Common myeloid progenitor, CD34-positive (primary cell): ENCODE measurements at regions of chr3 and their contacts with region 1.

Region 1: DNA sequence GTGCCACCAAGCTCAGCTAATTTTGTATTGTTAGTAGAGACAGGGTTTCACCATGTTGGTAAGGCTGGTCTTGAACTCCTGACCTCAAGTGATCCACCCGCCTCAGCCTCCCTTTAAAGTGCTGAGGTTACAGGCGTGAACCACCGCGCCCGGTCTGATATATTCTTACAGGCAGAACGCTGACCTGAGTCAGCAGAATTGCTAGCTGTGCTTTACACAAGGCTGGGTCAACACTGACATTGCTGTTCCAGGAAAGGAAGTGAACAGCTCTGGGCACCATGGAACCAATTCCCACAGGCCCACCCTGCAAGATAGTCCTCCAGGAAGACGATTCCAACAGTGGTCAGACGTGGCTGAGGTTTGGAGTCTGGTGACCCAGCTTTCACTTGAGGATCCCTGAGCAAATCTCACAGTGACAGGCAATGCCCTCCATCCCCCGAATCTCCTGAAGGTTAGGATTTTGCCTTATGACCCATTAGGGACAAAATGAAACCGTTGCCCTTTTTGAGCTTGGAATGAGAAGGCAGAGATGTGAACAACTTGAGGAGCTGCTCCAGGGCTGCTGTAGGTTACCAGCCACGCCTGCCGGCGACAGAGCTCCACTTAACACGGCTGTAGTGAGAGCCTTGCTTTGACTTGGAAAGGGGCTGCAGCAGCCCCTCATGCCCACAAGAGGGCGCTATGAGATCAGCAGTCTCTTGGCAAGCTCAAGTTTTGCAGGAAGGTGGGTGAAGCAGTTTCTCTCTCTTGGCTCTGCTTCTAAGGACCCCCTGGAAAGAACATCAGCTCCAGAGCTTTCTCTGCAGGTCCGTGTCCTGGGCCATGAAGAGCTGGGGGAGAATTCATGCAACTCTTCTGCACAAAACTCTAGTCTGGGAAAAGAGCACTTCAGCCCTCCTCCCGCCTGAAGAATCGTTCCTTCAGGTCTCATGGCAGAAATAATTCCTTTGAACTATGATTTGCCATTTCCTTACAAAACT is 74.1 kb downstream of the SENP2 start:
- DNase-seq: peak; percentile 81 to 90 (median 88)
- H3K4me3 ChIP-seq: no peak overlapping the region
- H3K27ac ChIP-seq: no peak overlapping the region
- H3K4me1 ChIP-seq: peaks cover 0 to 4% (median 0%) of the 10 kb centered on the region in 4 experiments
- H3K27me3 ChIP-seq: no peaks in the 10 kb centered on the region

Region 2: DNA sequence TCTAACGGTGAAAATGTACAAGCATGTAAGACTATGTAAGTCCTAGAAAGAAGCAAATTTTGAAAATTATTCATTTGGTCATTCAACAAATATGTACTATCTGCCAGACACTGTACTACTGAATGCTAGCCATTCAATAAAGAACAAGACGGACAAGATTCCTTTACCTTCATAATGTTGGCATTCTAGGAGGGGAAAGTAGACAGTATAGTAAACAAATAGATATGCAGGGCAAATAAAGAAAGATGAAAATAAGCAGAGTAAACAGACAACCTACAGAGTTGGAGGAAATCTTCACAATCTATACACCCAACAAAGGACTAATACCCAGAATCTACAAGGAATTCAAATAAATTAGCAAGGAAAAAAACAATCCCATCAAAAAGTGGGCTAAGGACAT is 540.1 kb before region 1 on chr3:
- CTCF ChIA-PET with region 1: no interaction called
- POLR2A ChIA-PET with region 1: no interaction called
- DNase-seq: no peak
- H3K4me3 ChIP-seq: no peak overlapping the region
- H3K27ac ChIP-seq: no peak overlapping the region
- H3K4me1 ChIP-seq: no peaks in the 10 kb centered on the region
- H3K27me3 ChIP-seq: peaks cover 0 to 3% (median 0%) of the 10 kb centered on the region in 5 experiments

Region 3: GRCh38 chr3:185409957-185410356 is 250.3 kb before region 1 on chr3:
- CTCF ChIA-PET with region 1: no interaction called
- POLR2A ChIA-PET with region 1: no interaction called
- DNase-seq: no peak
- H3K4me3 ChIP-seq: no peak overlapping the region
- H3K27ac ChIP-seq: no peak overlapping the region
- H3K4me1 ChIP-seq: no peaks in the 10 kb centered on the region
- H3K27me3 ChIP-seq: no peaks in the 10 kb centered on the region

Region 4: DNA sequence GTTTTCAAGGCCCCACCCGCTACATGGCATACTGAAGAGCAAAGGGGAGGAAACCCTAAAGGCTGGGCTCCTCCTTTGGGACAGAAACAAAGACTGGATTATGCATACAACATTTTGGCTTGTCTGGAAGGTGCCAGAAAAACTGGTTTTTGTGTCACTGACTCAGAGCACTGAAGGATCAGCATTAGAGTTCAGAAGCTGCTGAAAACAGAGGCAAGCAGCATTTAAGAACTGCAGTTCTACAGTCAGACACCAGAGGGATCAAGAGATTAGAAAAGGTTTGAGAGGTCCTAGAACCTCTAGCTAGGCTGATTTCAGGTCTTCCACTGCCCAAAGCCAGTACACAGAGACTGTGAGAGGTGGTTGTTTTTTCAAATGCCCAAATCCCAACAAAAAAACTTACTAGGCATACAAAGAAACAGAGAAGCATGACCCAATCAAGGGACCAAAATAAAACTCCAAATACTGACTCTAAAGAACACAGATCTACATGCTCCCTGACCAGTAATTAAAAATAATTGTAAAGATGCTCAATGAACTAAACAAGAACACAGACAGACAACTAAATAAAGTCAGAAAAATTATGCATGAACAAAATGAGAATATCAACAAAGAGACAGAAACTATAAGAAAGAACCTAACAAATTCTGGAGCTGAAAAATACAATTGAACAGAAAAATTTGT is 17.1 kb after region 1 on chr3:
- CTCF ChIA-PET with region 1: interaction called, 50 read pairs
- POLR2A ChIA-PET with region 1: no interaction called
- DNase-seq: peak; percentile 53 to 76 (median 69)
- H3K4me3 ChIP-seq: no peak overlapping the region
- H3K27ac ChIP-seq: no peak overlapping the region
- H3K4me1 ChIP-seq: no peaks in the 10 kb centered on the region
- H3K27me3 ChIP-seq: no peaks in the 10 kb centered on the region

Region 5: DNA sequence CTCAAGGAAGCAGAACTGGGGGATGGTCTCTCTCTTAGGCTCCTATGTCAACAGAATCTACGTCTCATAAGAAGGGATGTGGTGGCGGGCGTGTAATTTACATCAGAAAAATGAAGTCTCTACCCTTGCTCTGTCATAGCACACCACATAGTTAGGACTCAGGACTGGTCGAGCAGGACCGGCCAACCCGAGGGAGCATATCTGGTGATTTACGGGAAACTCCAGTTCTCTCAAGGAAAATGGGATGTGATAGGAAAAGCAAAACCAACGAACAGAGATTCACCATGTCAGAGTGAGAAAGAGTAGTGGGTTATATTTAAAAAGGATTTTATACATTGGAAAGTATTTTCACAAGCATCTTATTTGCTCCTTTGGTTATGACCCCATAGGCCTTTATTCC is 109.9 kb after region 1 on chr3:
- CTCF ChIA-PET with region 1: interaction called, 20 read pairs
- POLR2A ChIA-PET with region 1: no interaction called
- DNase-seq: no peak
- H3K4me3 ChIP-seq: no peak overlapping the region
- H3K27ac ChIP-seq: no peak overlapping the region
- H3K4me1 ChIP-seq: peaks cover 6 to 36% (median 22%) of the 10 kb centered on the region in 4 experiments
- H3K27me3 ChIP-seq: no peaks in the 10 kb centered on the region

Region 6: DNA sequence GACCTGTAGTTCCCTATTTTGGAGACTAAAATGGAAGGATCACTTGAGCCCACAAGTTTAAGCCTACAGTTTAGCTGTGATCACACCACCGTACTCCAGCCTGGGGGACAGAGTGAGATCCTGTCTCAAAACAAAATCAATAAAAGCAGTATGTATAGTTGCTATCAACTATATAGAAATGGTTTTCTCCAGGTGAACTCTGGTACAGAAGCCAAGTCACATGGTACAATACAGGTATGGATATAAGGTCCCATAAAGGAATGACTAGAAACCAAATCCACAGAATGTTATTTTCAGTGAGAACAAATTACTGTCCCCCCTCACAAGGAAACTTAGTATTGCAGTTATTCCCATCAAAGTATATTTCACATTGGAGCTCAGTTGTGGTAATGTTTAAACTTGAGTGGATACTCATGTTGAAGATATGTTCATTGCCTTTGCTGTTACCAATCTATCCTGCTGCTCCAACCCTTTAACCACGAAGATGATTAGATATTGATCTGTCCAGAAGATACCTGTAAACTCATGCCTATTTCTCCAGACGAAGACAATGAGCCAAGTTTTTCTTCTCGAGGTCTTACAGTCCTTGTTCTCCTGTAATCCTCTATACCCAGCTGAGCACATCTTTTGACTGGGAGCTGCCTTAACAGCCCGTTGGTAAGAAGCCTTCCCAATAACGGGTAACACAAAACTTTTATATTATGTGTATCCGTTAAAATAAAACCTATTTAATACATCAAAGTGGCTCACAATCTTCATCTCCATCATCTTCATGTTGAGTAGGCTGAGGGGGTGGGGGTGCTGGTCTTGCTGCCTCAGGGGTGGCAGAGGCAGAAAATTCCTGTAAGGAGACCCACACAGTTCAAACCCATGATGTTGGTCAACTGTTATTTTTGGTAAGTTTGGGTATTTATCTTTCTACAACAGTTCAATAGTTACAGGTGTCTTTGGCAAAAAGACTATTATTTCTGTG is 253.0 kb after region 1 on chr3:
- CTCF ChIA-PET with region 1: interaction called, 17 read pairs
- POLR2A ChIA-PET with region 1: no interaction called
- DNase-seq: peak in 2 of 3 donors; percentile 47 to 58
- H3K4me3 ChIP-seq: no peak overlapping the region
- H3K27ac ChIP-seq: no peak overlapping the region
- H3K4me1 ChIP-seq: no peaks in the 10 kb centered on the region
- H3K27me3 ChIP-seq: no peaks in the 10 kb centered on the region

Region 7: GRCh38 chr3:185976977-185977678 is 316.9 kb after region 1 on chr3:
- CTCF ChIA-PET with region 1: interaction called, 21 read pairs
- POLR2A ChIA-PET with region 1: no interaction called
- DNase-seq: peak; percentile 78 to 89 (median 83)
- H3K4me3 ChIP-seq: no peak overlapping the region
- H3K27ac ChIP-seq: no peak overlapping the region
- H3K4me1 ChIP-seq: peaks cover 0 to 10% (median 4%) of the 10 kb centered on the region in 4 experiments
- H3K27me3 ChIP-seq: no peaks in the 10 kb centered on the region